RWPE1 (cell line): ENCODE measurements at regions of chr3 and their contacts with region 1.

Region 1: DNA sequence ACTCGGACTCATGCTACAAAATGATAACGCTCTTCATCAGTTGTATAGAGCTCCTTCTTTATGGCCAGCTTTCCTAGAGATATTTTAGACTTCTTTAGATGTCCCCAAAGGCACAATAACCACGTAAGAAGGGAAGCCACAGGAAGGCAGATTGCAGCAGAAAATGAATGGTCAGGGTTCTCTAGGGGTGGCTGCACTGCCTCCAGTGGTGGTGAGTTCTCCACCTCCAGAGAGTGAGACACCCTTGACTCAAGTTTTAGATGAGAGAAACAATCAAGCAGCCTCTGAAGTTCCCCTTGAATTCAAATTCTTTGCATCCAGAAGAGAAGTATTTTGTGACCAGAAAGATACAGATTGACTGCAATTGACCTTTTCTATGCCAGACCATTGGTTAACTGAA is 191.5 kb downstream of the TP63 start:
- DNase-seq: no peak
- H3K27ac ChIP-seq: peak overlapping the region; percentile 100
- CTCF ChIP-seq: no peak

Region 2: GRCh38 chr3:189789432-189789831 is 33.3 kb before region 1 on chr3:
- CTCF ChIA-PET with region 1: interaction called, 10 read pairs
- POLR2A ChIA-PET with region 1: no interaction called
- DNase-seq: peak; percentile 77
- H3K27ac ChIP-seq: no peak overlapping the region
- CTCF ChIP-seq: no peak